Gastrocnemius medialis (tissue), 4 donors: ENCODE measurements at regions of chr2 and their contacts with region 1.

Region 1: GRCh38 chr2:225650041-225650440 is 250.5 kb downstream of the NYAP2 start:
- DNase-seq: no peak
- ATAC-seq: no peak
- H3K4me3 ChIP-seq: no peak overlapping the region
- H3K27ac ChIP-seq: no peak overlapping the region
- H3K4me1 ChIP-seq: no peaks in the 10 kb centered on the region
- H3K27me3 ChIP-seq: no peaks in the 10 kb centered on the region
- CTCF ChIP-seq: no peak
- POLR2A ChIP-seq: no peak

Region 2: GRCh38 chr2:225122583-225123486 is 527.2 kb before region 1 on chr2:
- in situ Hi-C with region 1: loop called in 1 of 4 experiments (anchors 25 kb)
- intact Hi-C with region 1: loop called (anchors 10 kb)
- DNase-seq: no peak
- ATAC-seq: no peak
- H3K4me3 ChIP-seq: no peak overlapping the region
- H3K27ac ChIP-seq: no peak overlapping the region
- H3K4me1 ChIP-seq: no peaks in the 10 kb centered on the region
- H3K27me3 ChIP-seq: no peaks in the 10 kb centered on the region
- CTCF ChIP-seq: peak in 1 of 5 experiments; percentile 10
- POLR2A ChIP-seq: no peak

Region 3: DNA sequence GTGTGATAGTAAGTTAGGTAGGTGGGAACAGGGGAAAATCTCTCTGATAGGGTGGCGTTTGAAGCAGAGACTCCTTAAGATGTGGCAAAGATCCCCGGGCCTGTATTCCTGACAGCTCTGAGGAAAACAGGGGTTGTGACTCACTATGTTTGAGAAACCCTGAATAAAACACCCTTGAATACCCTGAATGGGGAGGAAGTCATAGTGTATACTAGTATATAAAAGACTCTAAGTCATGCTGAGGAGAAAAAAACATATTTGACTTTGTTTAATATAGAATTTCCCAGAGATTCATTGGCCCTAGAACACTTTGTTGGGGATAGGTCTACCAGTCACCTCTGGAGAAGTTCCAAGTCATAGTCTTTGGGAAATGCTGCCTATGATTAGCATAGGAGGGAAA is 558.7 kb after region 1 on chr2:
- in situ Hi-C with region 1: no loop called
- intact Hi-C with region 1: no loop called
- DNase-seq: no peak
- ATAC-seq: no peak
- H3K4me3 ChIP-seq: no peak overlapping the region
- H3K27ac ChIP-seq: peak overlapping the region in 1 of 4 donors; percentile 7
- H3K4me1 ChIP-seq: peaks cover 8 to 10% of the 10 kb centered on the region in 2 donors
- H3K27me3 ChIP-seq: no peaks in the 10 kb centered on the region
- CTCF ChIP-seq: no peak
- POLR2A ChIP-seq: no peak